HCT116 (cell line): ENCODE measurements at regions of chr3 and their contacts with region 1.

Region 1: GRCh38 chr3:46488735-46489361 is 8.9 kb upstream of the RTP3 start:
- DNase-seq: peak; percentile 85
- ATAC-seq: peak; percentile 98
- H3K4me3 ChIP-seq: no peak overlapping the region
- H3K27ac ChIP-seq: no peak overlapping the region
- H3K4me1 ChIP-seq: peaks cover 0 to 10% of the 10 kb centered on the region in 2 experiments; a peak in 1 of 4 replicates
- H3K27me3 ChIP-seq: no peaks in the 10 kb centered on the region
- CTCF ChIP-seq: peak; percentile 100
- POLR2A ChIP-seq: no peak
- RAD21 ChIP-seq: peak; percentile 100

Region 2: DNA sequence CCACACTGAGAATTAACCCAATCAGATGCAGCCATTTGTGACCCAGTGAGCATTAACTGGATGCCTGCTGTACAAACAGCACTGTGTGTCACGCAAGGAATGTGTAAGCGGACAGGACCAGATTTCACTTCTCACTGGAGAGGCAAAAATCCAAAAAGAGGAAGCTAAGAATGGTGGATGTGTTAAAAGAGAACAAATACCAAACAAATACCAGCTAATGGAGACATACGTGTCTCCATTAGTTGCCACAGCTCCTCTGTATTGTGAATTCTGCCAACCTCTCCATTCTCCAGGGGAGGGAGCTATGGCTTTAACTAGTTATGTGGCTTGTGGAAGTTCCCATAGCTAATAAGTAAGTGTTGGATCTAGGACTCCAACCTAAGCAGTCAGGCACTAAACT is 26.7 kb before region 1 on chr3:
- CTCF ChIA-PET with region 1: interaction called, 12 read pairs
- POLR2A ChIA-PET with region 1: no interaction called
- RAD21 ChIA-PET with region 1: no interaction called
- intact Hi-C with region 1: no loop called
- DNase-seq: no peak
- ATAC-seq: peak; percentile 58; the same call in 1 of the 2 replicates
- H3K4me3 ChIP-seq: no peak overlapping the region
- H3K27ac ChIP-seq: no peak overlapping the region
- H3K4me1 ChIP-seq: no peaks in the 10 kb centered on the region; a peak in 1 of 4 replicates
- H3K27me3 ChIP-seq: peaks cover 16% of the 10 kb centered on the region
- CTCF ChIP-seq: peak in 2 of 3 experiments; percentile 10 to 21; a peak in 2 of 6 replicates
- POLR2A ChIP-seq: no peak
- RAD21 ChIP-seq: no peak; the same call in 1 of the 2 replicates

Region 3: GRCh38 chr3:46629551-46630517 is 141.0 kb after region 1 on chr3:
- CTCF ChIA-PET with region 1: interaction called, 31 read pairs
- POLR2A ChIA-PET with region 1: interaction called, 10 read pairs
- RAD21 ChIA-PET with region 1: interaction called, 3 to 5 read pairs
- intact Hi-C with region 1: loop called (anchors 1 kb)
- DNase-seq: peak; percentile 52
- ATAC-seq: peak; percentile 100
- H3K4me3 ChIP-seq: 0 out of 4 replicates have a peak overlapping the region, but pooled peaks of 1 of the 2 experiments have one; percentile 15
- H3K27ac ChIP-seq: no peak overlapping the region
- H3K4me1 ChIP-seq: peaks cover 0 to 7% of the 10 kb centered on the region in 2 experiments; a peak in 1 of 4 replicates
- H3K27me3 ChIP-seq: no peaks in the 10 kb centered on the region
- CTCF ChIP-seq: peak; percentile 97 to 100 (median 99)
- POLR2A ChIP-seq: no peak
- RAD21 ChIP-seq: peak; percentile 76

Region 4: DNA sequence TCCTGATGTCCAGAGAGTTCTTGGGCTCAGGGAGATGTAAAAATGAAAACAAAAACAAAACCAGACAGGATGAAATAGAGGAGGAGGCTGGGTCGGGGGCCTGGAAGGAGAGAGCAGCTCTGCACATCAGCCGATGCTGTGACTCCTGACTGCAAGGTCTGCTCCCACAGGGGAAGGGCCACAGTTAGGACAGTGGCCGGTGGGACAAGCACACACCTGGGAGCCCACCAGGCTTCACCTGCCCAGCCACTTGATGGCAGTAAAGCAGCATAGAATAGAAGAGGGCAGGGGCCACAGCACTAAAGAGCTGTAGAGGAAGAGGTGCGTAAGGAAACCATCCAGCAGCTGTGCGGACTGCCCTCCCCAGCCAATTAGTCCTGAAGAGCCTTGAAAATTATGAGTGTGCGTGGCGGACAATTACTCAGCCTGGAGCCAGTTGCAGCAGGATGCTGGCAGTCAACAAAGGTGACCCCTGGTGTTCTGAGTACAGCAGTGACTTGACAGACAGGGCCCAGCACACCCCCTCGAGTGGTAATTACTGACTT is 174.8 kb after region 1 on chr3:
- CTCF ChIA-PET with region 1: interaction called, 13 read pairs
- POLR2A ChIA-PET with region 1: no interaction called
- RAD21 ChIA-PET with region 1: interaction called in 1 of 2 experiments, 3 read pairs
- intact Hi-C with region 1: no loop called
- DNase-seq: no peak
- ATAC-seq: peak; percentile 77
- H3K4me3 ChIP-seq: no peak overlapping the region
- H3K27ac ChIP-seq: no peak overlapping the region
- H3K4me1 ChIP-seq: peaks cover 5 to 9% of the 10 kb centered on the region in 2 experiments; a peak in 3 of 4 replicates
- H3K27me3 ChIP-seq: no peaks in the 10 kb centered on the region
- CTCF ChIP-seq: peak; percentile 46 to 81 (median 55)
- POLR2A ChIP-seq: no peak
- RAD21 ChIP-seq: peak; percentile 76

Region 5: GRCh38 chr3:46733026-46733800 is 244.4 kb after region 1 on chr3:
- CTCF ChIA-PET with region 1: no interaction called
- POLR2A ChIA-PET with region 1: no interaction called
- RAD21 ChIA-PET with region 1: no interaction called
- intact Hi-C with region 1: no loop called
- DNase-seq: no peak
- ATAC-seq: no peak
- H3K4me3 ChIP-seq: no peak overlapping the region
- H3K27ac ChIP-seq: no peak overlapping the region
- H3K4me1 ChIP-seq: no peaks in the 10 kb centered on the region
- H3K27me3 ChIP-seq: no peaks in the 10 kb centered on the region
- CTCF ChIP-seq: no peak
- POLR2A ChIP-seq: no peak
- RAD21 ChIP-seq: no peak

Region 6: GRCh38 chr3:46895204-46895660 is 406.4 kb after region 1 on chr3:
- CTCF ChIA-PET with region 1: no interaction called
- POLR2A ChIA-PET with region 1: no interaction called
- RAD21 ChIA-PET with region 1: no interaction called
- intact Hi-C with region 1: loop called (anchors 5 kb)
- DNase-seq: peak; percentile 37
- ATAC-seq: peak; percentile 67
- H3K4me3 ChIP-seq: no peak overlapping the region
- H3K27ac ChIP-seq: no peak overlapping the region
- H3K4me1 ChIP-seq: peaks cover 0 to 13% of the 10 kb centered on the region in 2 experiments; a peak in 2 of 4 replicates
- H3K27me3 ChIP-seq: no peaks in the 10 kb centered on the region
- CTCF ChIP-seq: peak; percentile 90 to 95 (median 92)
- POLR2A ChIP-seq: no peak
- RAD21 ChIP-seq: peak; percentile 88